B cell (primary cell): ENCODE measurements at regions of chr10 and their contacts with region 1.

Region 1: DNA sequence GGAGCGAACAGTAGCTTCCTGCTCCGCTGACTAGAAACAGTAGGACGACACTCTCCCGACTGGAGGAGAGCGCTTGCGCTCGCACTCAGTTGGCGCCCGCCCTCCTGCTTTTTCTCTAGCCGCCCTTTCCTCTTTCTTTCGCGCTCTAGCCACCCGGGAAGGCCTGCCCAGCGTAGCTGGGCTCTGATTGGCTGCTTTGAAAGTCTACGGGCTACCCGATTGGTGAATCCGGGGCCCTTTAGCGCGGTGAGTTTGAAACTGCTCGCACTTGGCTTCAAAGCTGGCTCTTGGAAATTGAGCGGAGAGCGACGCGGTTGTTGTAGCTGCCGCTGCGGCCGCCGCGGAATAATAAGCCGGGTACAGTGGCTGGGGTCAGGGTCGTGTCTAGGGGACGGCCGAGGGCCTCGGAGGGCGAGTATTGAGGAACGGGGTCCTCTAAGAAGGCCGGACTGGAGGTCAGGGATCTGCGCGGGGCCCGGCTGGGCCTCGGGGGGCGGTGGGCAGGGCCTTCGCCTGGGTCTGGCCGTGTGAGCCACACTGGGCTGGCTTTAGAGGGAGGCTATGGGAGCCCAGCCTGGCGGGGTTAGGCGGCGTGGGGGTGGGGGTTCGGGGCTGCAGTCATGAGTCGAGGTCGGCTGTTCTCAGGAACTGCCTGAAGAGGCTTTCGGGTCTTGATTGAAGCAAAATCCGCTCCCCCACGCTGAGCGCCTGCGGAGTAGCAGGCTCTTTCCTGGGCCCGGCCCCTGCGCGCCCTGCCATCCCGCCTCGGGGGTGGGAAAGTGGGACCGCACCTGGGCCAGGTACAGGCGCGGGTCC is at the start of gene CDK1:
- DNase-seq: peak; percentile 96
- ATAC-seq: peak; percentile 99
- H3K4me3 ChIP-seq: peak within 1 kb of the TSS; percentile 45 to 77 (median 56)
- H3K4me3 Mint-ChIP-seq: peak within 1 kb of the TSS; percentile 98
- H3K27ac ChIP-seq: no peak within 1 kb of the TSS
- H3K27ac Mint-ChIP-seq: peak within 1 kb of the TSS; percentile 75
- H3K4me1 ChIP-seq: peaks cover 9% of the 10 kb centered on the region in 2 donors
- H3K4me1 Mint-ChIP-seq: peaks cover 13% of the 10 kb centered on the region
- H3K27me3 ChIP-seq: no peaks in the 10 kb centered on the region
- H3K27me3 Mint-ChIP-seq: no peaks in the 10 kb centered on the region
- CTCF ChIP-seq: no peak
- total RNA-seq, gene CDK1: 0.71 and 1.1 TPM in 2 replicates

Region 2: DNA sequence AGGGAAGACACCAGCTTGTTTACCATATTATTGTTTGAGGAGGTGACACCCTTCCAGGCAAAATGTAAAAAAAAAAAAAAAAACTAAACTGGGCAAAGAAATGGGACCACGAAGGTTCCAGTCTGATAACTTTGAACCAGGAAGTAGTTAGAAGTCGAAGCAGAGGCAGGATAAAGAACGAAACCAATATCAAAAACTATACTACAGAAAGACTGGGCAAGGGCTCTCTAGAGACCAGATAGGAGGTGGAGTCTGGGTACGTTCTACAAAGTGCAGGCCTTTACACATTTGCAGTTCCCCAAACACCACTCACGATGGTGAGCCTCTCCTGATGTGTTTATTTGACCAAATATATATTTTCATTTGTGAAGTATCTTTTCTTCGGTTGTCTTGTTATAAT is 125.8 kb before region 1 on chr10:
- CTCF ChIA-PET with region 1: no interaction called
- POLR2A ChIA-PET with region 1: no interaction called
- intact Hi-C with region 1: loop called (anchors 2 kb)
- DNase-seq: peak; percentile 49
- ATAC-seq: peak; percentile 96
- H3K4me3 ChIP-seq: no peak overlapping the region
- H3K4me3 Mint-ChIP-seq: peak overlapping the region; percentile 5
- H3K27ac ChIP-seq: peak overlapping the region; percentile 7 to 24
- H3K27ac Mint-ChIP-seq: peak overlapping the region; percentile 74
- H3K4me1 ChIP-seq: peaks cover 6 to 13% of the 10 kb centered on the region in 2 donors
- H3K4me1 Mint-ChIP-seq: peaks cover 16% of the 10 kb centered on the region
- H3K27me3 ChIP-seq: no peaks in the 10 kb centered on the region
- H3K27me3 Mint-ChIP-seq: no peaks in the 10 kb centered on the region
- CTCF ChIP-seq: no peak

Region 3: GRCh38 chr10:60733189-60733822 is 45.1 kb before region 1 on chr10:
- CTCF ChIA-PET with region 1: no interaction called
- POLR2A ChIA-PET with region 1: no interaction called
- intact Hi-C with region 1: loop called (anchors 2 kb)
- DNase-seq: peak; percentile 70
- ATAC-seq: peak; percentile 83
- H3K4me3 ChIP-seq: peak overlapping the region in 4 of 5 experiments; percentile 57 to 83 (median 71)
- H3K4me3 Mint-ChIP-seq: peak overlapping the region; percentile 76
- H3K27ac ChIP-seq: peak overlapping the region in 1 of 2 donors; percentile 71
- H3K27ac Mint-ChIP-seq: peak overlapping the region; percentile 72
- H3K4me1 ChIP-seq: peaks cover 21% of the 10 kb centered on the region in 2 donors
- H3K4me1 Mint-ChIP-seq: peaks cover 30% of the 10 kb centered on the region
- H3K27me3 ChIP-seq: peaks cover 0 to 21% (median 9%) of the 10 kb centered on the region in 4 experiments
- H3K27me3 Mint-ChIP-seq: no peaks in the 10 kb centered on the region
- CTCF ChIP-seq: peak; percentile 68

Region 4: GRCh38 chr10:60757420-60757895 is 21.0 kb before region 1 on chr10:
- CTCF ChIA-PET with region 1: no interaction called
- POLR2A ChIA-PET with region 1: no interaction called
- intact Hi-C with region 1: no loop called
- DNase-seq: no peak
- ATAC-seq: no peak
- H3K4me3 ChIP-seq: no peak overlapping the region
- H3K4me3 Mint-ChIP-seq: no peak overlapping the region
- H3K27ac ChIP-seq: no peak overlapping the region
- H3K27ac Mint-ChIP-seq: no peak overlapping the region
- H3K4me1 ChIP-seq: no peaks in the 10 kb centered on the region
- H3K4me1 Mint-ChIP-seq: no peaks in the 10 kb centered on the region
- H3K27me3 ChIP-seq: no peaks in the 10 kb centered on the region
- H3K27me3 Mint-ChIP-seq: peaks cover 35% of the 10 kb centered on the region
- CTCF ChIP-seq: no peak

Region 5: GRCh38 chr10:60944159-60944909 is 165.9 kb after region 1 on chr10 and contains the start of gene RHOBTB1:
- CTCF ChIA-PET with region 1: no interaction called
- POLR2A ChIA-PET with region 1: no interaction called
- intact Hi-C with region 1: loop called (anchors 2 kb)
- DNase-seq: peak; percentile 79
- ATAC-seq: peak; percentile 65
- H3K4me3 ChIP-seq: peak within 1 kb of the TSS; percentile 51 to 71 (median 67)
- H3K4me3 Mint-ChIP-seq: peak within 1 kb of the TSS; percentile 89
- H3K27ac ChIP-seq: peak within 1 kb of the TSS in 1 of 2 donors; percentile 32
- H3K27ac Mint-ChIP-seq: peak within 1 kb of the TSS; percentile 46
- H3K4me1 ChIP-seq: peaks cover 17 to 24% of the 10 kb centered on the region in 2 donors
- H3K4me1 Mint-ChIP-seq: peaks cover 14% of the 10 kb centered on the region
- H3K27me3 ChIP-seq: peaks cover 0 to 22% (median 9%) of the 10 kb centered on the region in 4 experiments
- H3K27me3 Mint-ChIP-seq: peaks cover 21% of the 10 kb centered on the region
- CTCF ChIP-seq: no peak
- total RNA-seq, gene RHOBTB1: 0.07 and 1.1 TPM in 2 replicates

Region 6: GRCh38 chr10:60989400-60989876 is 211.0 kb after region 1 on chr10:
- CTCF ChIA-PET with region 1: no interaction called
- POLR2A ChIA-PET with region 1: no interaction called
- intact Hi-C with region 1: no loop called
- DNase-seq: peak; percentile 61
- ATAC-seq: no peak
- H3K4me3 ChIP-seq: no peak overlapping the region
- H3K4me3 Mint-ChIP-seq: no peak overlapping the region
- H3K27ac ChIP-seq: no peak overlapping the region
- H3K27ac Mint-ChIP-seq: no peak overlapping the region
- H3K4me1 ChIP-seq: no peaks in the 10 kb centered on the region
- H3K4me1 Mint-ChIP-seq: no peaks in the 10 kb centered on the region
- H3K27me3 ChIP-seq: peaks cover 0 to 4% (median 0%) of the 10 kb centered on the region in 4 experiments
- H3K27me3 Mint-ChIP-seq: peaks cover 19% of the 10 kb centered on the region
- CTCF ChIP-seq: no peak

Region 7: GRCh38 chr10:61024856-61025600 is 246.6 kb after region 1 on chr10:
- CTCF ChIA-PET with region 1: no interaction called
- POLR2A ChIA-PET with region 1: no interaction called
- intact Hi-C with region 1: no loop called
- DNase-seq: peak; percentile 18
- ATAC-seq: peak; percentile 33
- H3K4me3 ChIP-seq: no peak overlapping the region
- H3K4me3 Mint-ChIP-seq: no peak overlapping the region
- H3K27ac ChIP-seq: no peak overlapping the region
- H3K27ac Mint-ChIP-seq: no peak overlapping the region
- H3K4me1 ChIP-seq: no peaks in the 10 kb centered on the region
- H3K4me1 Mint-ChIP-seq: no peaks in the 10 kb centered on the region
- H3K27me3 ChIP-seq: peaks cover 0 to 7% (median 3%) of the 10 kb centered on the region in 4 experiments
- H3K27me3 Mint-ChIP-seq: peaks cover 23% of the 10 kb centered on the region
- CTCF ChIP-seq: peak; percentile 72

Region 8: GRCh38 chr10:61066661-61067353 is 288.4 kb after region 1 on chr10:
- CTCF ChIA-PET with region 1: no interaction called
- POLR2A ChIA-PET with region 1: no interaction called
- intact Hi-C with region 1: no loop called
- DNase-seq: no peak
- ATAC-seq: no peak
- H3K4me3 ChIP-seq: no peak overlapping the region
- H3K4me3 Mint-ChIP-seq: no peak overlapping the region
- H3K27ac ChIP-seq: no peak overlapping the region
- H3K27ac Mint-ChIP-seq: no peak overlapping the region
- H3K4me1 ChIP-seq: no peaks in the 10 kb centered on the region
- H3K4me1 Mint-ChIP-seq: no peaks in the 10 kb centered on the region
- H3K27me3 ChIP-seq: no peaks in the 10 kb centered on the region
- H3K27me3 Mint-ChIP-seq: peaks cover 20% of the 10 kb centered on the region
- CTCF ChIP-seq: no peak